B cell (primary cell): ENCODE measurements at regions of chr1 and their contacts with region 1.

Region 1: GRCh38 chr1:54886724-54887664 is at the start of gene DHCR24:
- DNase-seq: peak; percentile 78
- ATAC-seq: peak; percentile 95
- H3K4me3 ChIP-seq: peak within 1 kb of the TSS in 4 of 5 experiments; percentile 54 to 79 (median 76)
- H3K4me3 Mint-ChIP-seq: peak within 1 kb of the TSS; percentile 96
- H3K27ac ChIP-seq: no peak within 1 kb of the TSS
- H3K27ac Mint-ChIP-seq: peak within 1 kb of the TSS; percentile 83
- H3K4me1 ChIP-seq: peaks cover 11 to 17% of the 10 kb centered on the region in 2 donors
- H3K4me1 Mint-ChIP-seq: peaks cover 30% of the 10 kb centered on the region
- H3K27me3 ChIP-seq: peaks cover 0 to 18% (median 1%) of the 10 kb centered on the region in 4 experiments
- H3K27me3 Mint-ChIP-seq: peaks cover 23% of the 10 kb centered on the region
- CTCF ChIP-seq: no peak
- total RNA-seq, gene DHCR24: 10.5 and 13.3 TPM in 2 replicates

Region 2: GRCh38 chr1:54052934-54053744 is 833.9 kb before region 1 on chr1 and contains the starts of genes TCEANC2 and TMEM59:
- CTCF ChIA-PET with region 1: no interaction called
- POLR2A ChIA-PET with region 1: no interaction called
- intact Hi-C with region 1: loop called (anchors 2 kb)
- DNase-seq: peak; percentile 99
- ATAC-seq: peak; percentile 91
- H3K4me3 ChIP-seq: peak within 1 kb of the TSS; percentile 65 to 99 (median 93)
- H3K4me3 Mint-ChIP-seq: no peak within 1 kb of the TSS
- H3K27ac ChIP-seq: peak within 1 kb of the TSS; percentile 75 to 94
- H3K27ac Mint-ChIP-seq: peak within 1 kb of the TSS; percentile 60
- H3K4me1 ChIP-seq: peaks cover 36% of the 10 kb centered on the region in 2 donors
- H3K4me1 Mint-ChIP-seq: peaks cover 36% of the 10 kb centered on the region
- H3K27me3 ChIP-seq: no peaks in the 10 kb centered on the region
- H3K27me3 Mint-ChIP-seq: no peaks in the 10 kb centered on the region
- CTCF ChIP-seq: no peak
- total RNA-seq, gene TCEANC2: 13.5 and 15.9 TPM in 2 replicates
- total RNA-seq, gene TMEM59: 146 and 152 TPM in 2 replicates

Region 3: GRCh38 chr1:54715493-54716298 is 171.3 kb before region 1 on chr1 and contains the start of gene TTC4:
- CTCF ChIA-PET with region 1: no interaction called
- POLR2A ChIA-PET with region 1: no interaction called
- intact Hi-C with region 1: loop called (anchors 2 kb)
- DNase-seq: peak; percentile 91
- ATAC-seq: peak; percentile 99
- H3K4me3 ChIP-seq: peak within 1 kb of the TSS; percentile 81 to 92 (median 91)
- H3K4me3 Mint-ChIP-seq: peak within 1 kb of the TSS; percentile 87
- H3K27ac ChIP-seq: peak within 1 kb of the TSS; percentile 50 to 71
- H3K27ac Mint-ChIP-seq: peak within 1 kb of the TSS; percentile 83
- H3K4me1 ChIP-seq: peaks cover 16 to 17% of the 10 kb centered on the region in 2 donors
- H3K4me1 Mint-ChIP-seq: peaks cover 26% of the 10 kb centered on the region
- H3K27me3 ChIP-seq: no peaks in the 10 kb centered on the region
- H3K27me3 Mint-ChIP-seq: no peaks in the 10 kb centered on the region
- CTCF ChIP-seq: no peak
- total RNA-seq, gene TTC4: 19.9 and 23.9 TPM in 2 replicates

Region 4: GRCh38 chr1:54871275-54872035 is 15.5 kb before region 1 on chr1:
- CTCF ChIA-PET with region 1: no interaction called
- POLR2A ChIA-PET with region 1: no interaction called
- intact Hi-C with region 1: no loop called
- DNase-seq: no peak
- ATAC-seq: no peak
- H3K4me3 ChIP-seq: no peak overlapping the region
- H3K4me3 Mint-ChIP-seq: no peak overlapping the region
- H3K27ac ChIP-seq: no peak overlapping the region
- H3K27ac Mint-ChIP-seq: no peak overlapping the region
- H3K4me1 ChIP-seq: no peaks in the 10 kb centered on the region
- H3K4me1 Mint-ChIP-seq: peaks cover 2% of the 10 kb centered on the region
- H3K27me3 ChIP-seq: no peaks in the 10 kb centered on the region
- H3K27me3 Mint-ChIP-seq: no peaks in the 10 kb centered on the region
- CTCF ChIP-seq: no peak